Naive thymus-derived CD8-positive, alpha-beta T cell (primary cell): ENCODE measurements at regions of chr1 and their contacts with region 1.

Region 1: GRCh38 chr1:161201828-161202725 is at the start of gene NDUFS2:
- DNase-seq: peak; percentile 83 to 98 (median 94)
- ATAC-seq: peak; percentile 97 to 98
- H3K4me3 Mint-ChIP-seq: peak within 1 kb of the TSS; percentile 92 to 97 (median 94)
- H3K27ac Mint-ChIP-seq: peak within 1 kb of the TSS; percentile 95 to 99 (median 99)
- H3K4me1 Mint-ChIP-seq: peaks cover 32 to 83% (median 71%) of the 10 kb centered on the region in 4 donors
- H3K27me3 Mint-ChIP-seq: no peaks in the 10 kb centered on the region
- polyA plus RNA-seq, gene NDUFS2: 78.6 to 106 (median 95.4) TPM

Region 2: DNA sequence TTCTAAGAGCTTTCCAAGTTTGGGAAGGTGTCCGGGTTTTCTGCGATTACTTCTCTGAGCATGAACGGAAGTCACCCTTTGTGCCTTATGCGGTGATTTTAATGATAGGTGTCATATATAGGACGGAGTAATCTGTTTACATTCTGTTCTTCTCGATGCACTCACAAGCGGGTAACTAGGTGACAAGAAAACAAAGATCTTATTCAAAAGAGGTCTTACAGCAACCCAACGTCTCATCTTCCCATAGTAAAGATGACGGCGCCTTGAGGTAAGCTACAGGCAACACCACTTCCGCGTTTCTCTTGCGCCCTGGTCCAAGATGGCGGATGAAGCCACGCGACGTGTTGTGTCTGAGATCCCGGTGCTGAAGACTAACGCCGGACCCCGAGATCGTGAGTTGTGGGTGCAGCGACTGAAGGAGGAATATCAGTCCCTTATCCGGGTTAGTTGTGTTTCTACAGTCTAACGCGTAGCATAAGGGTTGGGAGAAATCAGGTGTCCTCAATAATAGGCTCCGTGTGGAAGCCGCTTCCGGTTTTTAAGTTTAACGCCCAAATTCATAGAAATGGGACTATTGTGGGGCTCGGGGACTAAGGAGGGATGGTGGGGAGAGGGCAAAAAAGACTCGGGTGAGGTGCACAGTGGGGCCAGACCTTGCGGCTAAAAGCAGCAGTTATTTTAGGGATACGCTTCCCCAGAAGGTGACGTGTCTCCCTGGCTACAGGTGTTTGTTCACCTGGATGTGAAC is 48.2 kb before region 1 on chr1 and contains the start of gene UFC1:
- POLR2A ChIA-PET with region 1: interaction called, 21 read pairs
- DNase-seq: peak; percentile 65 to 93 (median 84)
- ATAC-seq: peak; percentile 91 to 94
- H3K4me3 Mint-ChIP-seq: peak within 1 kb of the TSS; percentile 91 to 100 (median 98)
- H3K27ac Mint-ChIP-seq: peak within 1 kb of the TSS; percentile 99 to 100 (median 100)
- H3K4me1 Mint-ChIP-seq: peaks cover 15 to 39% (median 31%) of the 10 kb centered on the region in 4 donors
- H3K27me3 Mint-ChIP-seq: peaks cover 0 to 1% (median 0%) of the 10 kb centered on the region in 5 donors
- polyA plus RNA-seq, gene UFC1: 148 to 158 (median 155) TPM

Region 3: GRCh38 chr1:161177112-161177935 is 24.8 kb before region 1 on chr1 and contains the start of gene B4GALT3:
- POLR2A ChIA-PET with region 1: interaction called, 90 read pairs
- DNase-seq: peak; percentile 85 to 98 (median 93)
- ATAC-seq: peak; percentile 87 to 92
- H3K4me3 Mint-ChIP-seq: peak within 1 kb of the TSS; percentile 93 to 100 (median 99)
- H3K27ac Mint-ChIP-seq: peak within 1 kb of the TSS; percentile 97 to 100 (median 98)
- H3K4me1 Mint-ChIP-seq: peaks cover 40 to 89% (median 78%) of the 10 kb centered on the region in 4 donors
- H3K27me3 Mint-ChIP-seq: no peaks in the 10 kb centered on the region
- polyA plus RNA-seq, gene B4GALT3: 35.4 to 49.9 (median 37.6) TPM

Region 4: DNA sequence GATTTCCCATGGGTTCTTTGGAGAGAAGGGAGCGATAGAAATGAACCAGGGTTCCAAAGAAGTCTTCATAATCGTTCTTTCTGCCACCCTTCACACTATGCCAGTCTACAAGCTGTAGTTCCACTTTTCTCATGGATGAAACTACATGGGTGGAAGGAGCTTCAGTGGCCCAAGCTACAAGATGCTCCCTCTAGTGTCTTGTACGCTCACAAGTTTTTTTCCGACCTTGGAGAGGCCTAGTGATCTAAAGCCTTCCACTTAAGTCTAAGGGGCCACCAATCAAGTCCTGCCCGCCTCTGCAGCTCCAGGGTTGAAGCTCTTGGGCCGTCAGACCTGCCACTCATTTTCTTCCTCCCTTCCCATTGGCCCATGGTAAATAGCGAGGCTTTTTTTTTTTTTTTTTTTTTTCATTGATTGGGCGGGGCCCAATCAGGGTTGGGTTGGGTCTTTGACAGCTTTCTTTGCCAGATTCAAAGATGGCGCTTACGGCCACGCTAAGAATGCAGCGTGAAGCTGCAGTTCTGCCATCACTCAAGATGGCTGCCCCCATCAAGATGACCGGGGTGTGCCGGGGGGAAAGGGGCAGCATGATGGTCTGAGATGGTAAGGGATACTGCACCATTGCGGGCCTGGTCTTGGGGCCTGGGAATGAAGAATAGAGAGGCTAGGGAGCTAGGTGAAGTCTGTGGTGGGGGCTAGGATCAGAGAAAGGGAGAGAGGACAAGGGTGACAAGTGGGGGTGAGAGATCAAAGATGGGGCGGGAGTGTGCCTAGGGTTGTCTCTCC is 23.6 kb after region 1 on chr1 and contains the start of gene TOMM40L:
- POLR2A ChIA-PET with region 1: interaction called, 231 read pairs
- DNase-seq: peak; percentile 68 to 97 (median 88)
- ATAC-seq: peak; percentile 97 to 98
- H3K4me3 Mint-ChIP-seq: peak within 1 kb of the TSS; percentile 94 to 100 (median 100)
- H3K27ac Mint-ChIP-seq: peak within 1 kb of the TSS; percentile 87 to 99 (median 96)
- H3K4me1 Mint-ChIP-seq: peaks cover 33 to 62% (median 54%) of the 10 kb centered on the region in 4 donors
- H3K27me3 Mint-ChIP-seq: no peaks in the 10 kb centered on the region
- polyA plus RNA-seq, gene TOMM40L: 4.9 to 8.1 (median 8.0) TPM

Region 5: GRCh38 chr1:161314201-161314981 is 112.3 kb after region 1 on chr1 and contains the start of gene SDHC:
- POLR2A ChIA-PET with region 1: interaction called, 10 read pairs
- DNase-seq: peak; percentile 88 to 95 (median 90)
- ATAC-seq: peak; percentile 98 to 99
- H3K4me3 Mint-ChIP-seq: peak within 1 kb of the TSS; percentile 96 to 99 (median 98)
- H3K27ac Mint-ChIP-seq: peak within 1 kb of the TSS; percentile 98 to 100 (median 99)
- H3K4me1 Mint-ChIP-seq: peaks cover 11 to 29% (median 26%) of the 10 kb centered on the region in 4 donors
- H3K27me3 Mint-ChIP-seq: no peaks in the 10 kb centered on the region
- polyA plus RNA-seq, gene SDHC: 212 to 297 (median 217) TPM